HCT116 (cell line): ENCODE measurements at regions of chr11 and their contacts with region 1.

Region 1: GRCh38 chr11:46247664-46248063 is 29.8 kb upstream of the CREB3L1 start:
- DNase-seq: peak; percentile 76
- ATAC-seq: peak; percentile 29
- H3K4me3 ChIP-seq: no peak overlapping the region
- H3K27ac ChIP-seq: peak overlapping the region; percentile 47; the same call in 1 of the 2 replicates
- H3K4me1 ChIP-seq: peaks cover 11 to 53% of the 10 kb centered on the region in 2 experiments
- H3K27me3 ChIP-seq: no peaks in the 10 kb centered on the region
- CTCF ChIP-seq: peak; percentile 62 to 90 (median 76)
- POLR2A ChIP-seq: no peak
- RAD21 ChIP-seq: peak; percentile 95

Region 2: DNA sequence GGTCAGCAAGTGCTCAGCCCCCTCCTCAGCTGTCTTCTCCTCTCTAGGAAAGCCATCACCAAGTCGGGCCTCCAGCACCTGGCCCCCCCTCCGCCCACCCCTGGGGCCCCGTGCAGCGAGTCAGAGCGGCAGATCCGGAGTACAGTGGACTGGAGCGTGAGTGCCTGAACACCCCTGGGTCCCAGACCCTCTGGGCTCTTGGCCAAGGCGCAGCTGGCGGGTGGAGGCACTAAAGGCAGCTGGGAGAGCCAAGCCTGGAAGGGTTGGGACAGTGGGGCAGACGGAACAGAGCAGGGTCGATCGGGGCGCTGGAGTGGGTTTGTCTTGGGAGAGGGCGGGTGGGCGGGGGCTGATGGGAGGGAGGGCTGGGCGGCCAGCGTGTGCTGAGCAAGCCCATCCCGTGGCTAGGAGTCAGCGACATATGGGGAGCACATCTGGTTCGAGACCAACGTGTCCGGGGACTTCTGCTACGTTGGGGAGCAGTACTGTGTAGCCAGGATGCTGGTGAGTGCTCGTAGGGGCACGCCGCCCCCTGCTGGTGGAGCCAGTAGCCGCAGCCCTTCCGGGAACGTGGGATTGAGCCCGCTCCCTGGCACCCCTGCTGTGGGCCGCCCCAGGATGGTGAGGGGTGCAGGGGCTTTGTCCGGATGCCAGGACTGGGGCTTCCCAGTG is 119.7 kb after region 1 on chr11:
- CTCF ChIA-PET with region 1: no interaction called
- POLR2A ChIA-PET with region 1: interaction called, 3 read pairs
- RAD21 ChIA-PET with region 1: no interaction called
- intact Hi-C with region 1: loop called (anchors 5 kb)
- DNase-seq: no peak
- ATAC-seq: peak; percentile 62
- H3K4me3 ChIP-seq: no peak overlapping the region
- H3K27ac ChIP-seq: no peak overlapping the region; the same call in 1 of the 2 replicates
- H3K4me1 ChIP-seq: peaks cover 16 to 42% of the 10 kb centered on the region in 2 experiments
- H3K27me3 ChIP-seq: no peaks in the 10 kb centered on the region
- CTCF ChIP-seq: peak; percentile 59 to 83 (median 78); a peak in 5 of 6 replicates
- POLR2A ChIP-seq: no peak
- RAD21 ChIP-seq: peak; percentile 74